AG04450 (cell line): ENCODE measurements at regions of chr10 and their contacts with region 1.

Region 1: DNA sequence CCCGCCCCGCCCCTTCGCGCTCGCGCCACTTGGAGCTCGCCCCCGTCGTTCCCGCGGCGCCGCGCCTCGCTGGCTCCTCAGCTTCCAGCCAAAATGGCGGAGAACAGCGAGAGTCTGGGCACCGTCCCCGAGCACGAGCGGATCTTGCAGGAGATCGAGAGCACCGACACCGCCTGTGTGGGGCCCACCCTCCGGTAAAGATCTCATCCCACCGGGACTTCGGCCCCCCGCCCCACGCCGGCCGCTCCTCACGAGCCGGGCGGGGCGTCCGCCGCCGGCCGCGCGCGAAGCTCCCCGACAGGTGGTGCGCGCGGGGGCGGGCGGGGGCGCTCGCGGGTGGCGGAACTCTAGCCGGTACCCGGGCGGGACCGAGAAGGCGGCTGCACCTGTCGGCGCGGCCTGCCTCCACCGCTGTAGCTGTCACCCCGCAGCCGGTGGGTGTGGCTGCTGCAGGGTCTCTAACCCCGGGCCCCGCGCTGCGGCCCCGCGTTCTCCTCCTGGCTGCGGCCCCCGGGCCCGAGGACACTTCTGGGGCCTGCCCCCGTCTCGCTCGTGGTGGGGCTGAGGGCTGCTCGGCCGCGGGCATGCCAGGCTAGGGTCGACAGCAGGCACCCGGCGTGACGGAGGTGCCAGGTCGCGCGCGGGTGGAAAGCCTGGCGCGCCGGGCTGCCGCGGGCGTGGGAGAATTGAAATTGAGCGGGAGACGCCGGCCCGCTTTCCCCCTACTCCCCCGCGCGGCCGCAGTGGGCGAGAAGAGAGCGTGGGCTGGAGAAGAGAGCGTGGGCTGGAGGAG is at the start of gene EXOC6:
- DNase-seq: no peak
- H3K4me3 ChIP-seq: peak within 1 kb of the TSS; percentile 75
- H3K27ac ChIP-seq: no peak within 1 kb of the TSS
- H3K27me3 ChIP-seq: no peaks in the 10 kb centered on the region
- CTCF ChIP-seq: peak; percentile 9; the same call in 1 of the 2 replicates
- polyA plus RNA-seq, gene EXOC6: 17.7 and 21.8 TPM in 2 replicates

Region 2: GRCh38 chr10:92689663-92690210 is 158.9 kb before region 1 on chr10 and contains the start of gene HHEX:
- CTCF ChIA-PET with region 1: interaction called, 13 read pairs
- POLR2A ChIA-PET with region 1: interaction called, 18 read pairs
- DNase-seq: no peak
- H3K4me3 ChIP-seq: peak within 1 kb of the TSS; percentile 77
- H3K27ac ChIP-seq: peak within 1 kb of the TSS; percentile 68
- H3K27me3 ChIP-seq: no peaks in the 10 kb centered on the region
- CTCF ChIP-seq: 0 out of 2 replicates have a peak, but pooled peaks have one; percentile 4
- polyA plus RNA-seq, gene HHEX: 13.6 and 14.0 TPM in 2 replicates

Region 3: GRCh38 chr10:92822060-92822634 is 26.5 kb before region 1 on chr10:
- CTCF ChIA-PET with region 1: interaction called, 13 read pairs
- POLR2A ChIA-PET with region 1: interaction called, 3 read pairs
- DNase-seq: peak; percentile 73
- H3K4me3 ChIP-seq: no peak overlapping the region
- H3K27ac ChIP-seq: peak overlapping the region; percentile 92
- H3K27me3 ChIP-seq: no peaks in the 10 kb centered on the region
- CTCF ChIP-seq: no peak

Region 4: GRCh38 chr10:92829042-92829785 is 19.4 kb before region 1 on chr10:
- CTCF ChIA-PET with region 1: interaction called, 34 read pairs
- POLR2A ChIA-PET with region 1: interaction called, 10 read pairs
- DNase-seq: no peak
- H3K4me3 ChIP-seq: no peak overlapping the region
- H3K27ac ChIP-seq: no peak overlapping the region
- H3K27me3 ChIP-seq: no peaks in the 10 kb centered on the region
- CTCF ChIP-seq: no peak

Region 5: DNA sequence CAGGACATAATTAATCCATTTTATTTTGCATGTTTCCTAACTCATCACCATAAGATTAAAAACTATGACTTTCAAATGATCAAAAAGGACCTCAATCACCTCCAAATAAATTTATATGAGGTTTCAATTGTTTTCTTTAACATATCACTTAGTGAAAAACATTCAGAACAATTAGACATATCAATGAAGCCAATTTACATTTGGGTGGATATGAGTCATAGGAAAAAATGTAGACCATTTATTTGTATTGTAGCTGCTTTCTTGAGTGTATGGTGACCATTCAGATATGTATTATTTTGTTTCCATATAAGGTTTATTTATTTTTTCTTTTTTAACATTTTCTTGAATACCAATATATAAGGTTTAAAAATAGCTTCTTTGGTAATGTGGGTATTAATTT is 13.7 kb before region 1 on chr10:
- CTCF ChIA-PET with region 1: interaction called, 34 read pairs
- POLR2A ChIA-PET with region 1: interaction called, 10 read pairs
- DNase-seq: no peak
- H3K4me3 ChIP-seq: no peak overlapping the region
- H3K27ac ChIP-seq: no peak overlapping the region
- H3K27me3 ChIP-seq: no peaks in the 10 kb centered on the region
- CTCF ChIP-seq: no peak

Region 6: DNA sequence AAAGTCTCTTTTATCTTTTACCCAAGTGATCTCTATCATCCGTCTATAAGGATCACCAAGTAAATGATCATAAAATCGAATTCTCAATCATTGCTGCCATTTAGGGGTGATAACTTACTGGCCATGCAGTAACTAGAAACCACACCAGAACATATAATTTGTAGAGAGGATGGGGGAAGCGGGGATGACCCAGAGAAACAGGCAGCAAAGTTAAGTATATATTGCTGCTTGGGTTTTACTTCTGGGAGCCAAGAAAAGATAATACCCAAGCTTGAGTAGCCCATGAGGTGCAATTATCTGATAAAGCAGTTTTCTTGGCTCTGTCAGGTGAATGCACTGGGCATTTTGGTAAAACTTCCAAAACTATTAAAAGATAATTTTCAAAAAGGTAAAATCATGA is 18.6 kb after region 1 on chr10:
- CTCF ChIA-PET with region 1: interaction called, 13 read pairs
- POLR2A ChIA-PET with region 1: no interaction called
- DNase-seq: no peak
- H3K4me3 ChIP-seq: no peak overlapping the region
- H3K27ac ChIP-seq: no peak overlapping the region
- H3K27me3 ChIP-seq: no peaks in the 10 kb centered on the region
- CTCF ChIP-seq: no peak

Region 7: DNA sequence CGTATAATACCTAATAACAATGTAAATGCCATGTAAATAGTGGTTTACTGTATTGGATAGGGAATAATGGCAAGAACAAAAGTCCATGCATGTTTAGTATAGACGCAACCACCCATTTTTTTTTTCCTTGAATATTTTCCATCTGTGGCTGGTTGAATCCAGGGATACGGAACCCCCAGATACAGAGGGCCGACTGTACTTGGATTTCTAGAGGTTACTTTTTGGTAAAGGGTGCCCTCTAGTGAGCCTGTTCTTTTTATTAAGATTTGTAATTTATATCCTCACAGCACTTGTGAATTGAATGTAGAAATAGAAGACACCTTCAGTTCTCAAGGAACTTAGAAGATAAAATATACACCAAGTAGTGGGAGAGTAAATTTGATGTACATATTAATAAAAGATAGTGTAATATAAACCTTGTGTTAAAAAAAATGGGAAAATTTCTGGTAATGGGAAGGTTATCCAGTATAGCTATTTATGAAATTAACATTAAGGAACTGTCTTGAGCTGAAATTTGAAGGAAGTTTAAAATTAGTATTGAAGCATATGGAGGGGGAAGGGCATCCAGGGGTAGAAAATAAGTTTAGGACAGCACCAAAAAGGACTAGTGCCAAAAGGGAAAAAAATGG is 31.7 kb after region 1 on chr10:
- CTCF ChIA-PET with region 1: interaction called, 13 read pairs
- POLR2A ChIA-PET with region 1: no interaction called
- DNase-seq: peak; percentile 24
- H3K4me3 ChIP-seq: no peak overlapping the region
- H3K27ac ChIP-seq: no peak overlapping the region
- H3K27me3 ChIP-seq: no peaks in the 10 kb centered on the region
- CTCF ChIP-seq: peak; percentile 53